ENCODE measurements at regions of chr11 and their contacts with region 1.

Region 1: DNA sequence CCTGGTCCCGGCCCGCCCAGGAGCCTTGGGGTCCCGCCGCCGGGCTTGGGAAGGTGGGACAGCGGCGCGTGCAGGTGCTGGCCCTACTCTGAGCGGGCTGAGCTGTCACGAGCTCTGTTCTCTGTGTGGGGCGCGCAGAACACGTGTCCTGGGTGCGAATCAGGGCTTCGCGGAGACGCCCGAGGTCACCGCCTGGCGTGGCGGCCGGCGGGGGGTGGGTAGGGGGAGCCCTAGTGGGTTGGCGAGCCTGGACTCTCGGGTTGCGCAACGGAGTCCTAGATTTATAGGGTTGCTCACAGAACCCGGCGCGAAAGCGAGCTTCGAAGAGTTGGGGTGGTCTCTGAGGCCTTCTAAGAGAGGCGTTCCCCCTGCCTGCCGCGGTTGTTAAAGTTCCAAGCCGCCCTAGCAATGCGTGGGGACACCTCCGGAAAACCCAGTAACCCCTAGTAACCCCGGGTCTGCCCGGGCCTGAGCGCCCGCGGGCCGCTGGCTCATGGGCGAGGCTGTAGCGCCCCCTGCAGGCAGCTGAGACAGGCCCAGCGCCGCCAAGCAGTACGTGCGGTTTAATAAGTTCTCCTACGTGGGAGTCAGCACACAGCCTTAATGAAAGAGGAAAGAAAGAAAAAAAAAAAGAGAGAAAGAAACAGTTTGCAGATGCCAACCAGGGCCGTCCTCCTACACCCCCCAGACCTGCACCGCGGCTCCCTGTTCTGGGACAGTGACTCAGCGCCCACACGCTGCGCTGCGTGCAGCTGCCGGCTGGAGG is 2.8 kb downstream of the ADM start:
- DNase-seq: peak; percentile 92
- ATAC-seq: peak; percentile 66

Region 2: DNA sequence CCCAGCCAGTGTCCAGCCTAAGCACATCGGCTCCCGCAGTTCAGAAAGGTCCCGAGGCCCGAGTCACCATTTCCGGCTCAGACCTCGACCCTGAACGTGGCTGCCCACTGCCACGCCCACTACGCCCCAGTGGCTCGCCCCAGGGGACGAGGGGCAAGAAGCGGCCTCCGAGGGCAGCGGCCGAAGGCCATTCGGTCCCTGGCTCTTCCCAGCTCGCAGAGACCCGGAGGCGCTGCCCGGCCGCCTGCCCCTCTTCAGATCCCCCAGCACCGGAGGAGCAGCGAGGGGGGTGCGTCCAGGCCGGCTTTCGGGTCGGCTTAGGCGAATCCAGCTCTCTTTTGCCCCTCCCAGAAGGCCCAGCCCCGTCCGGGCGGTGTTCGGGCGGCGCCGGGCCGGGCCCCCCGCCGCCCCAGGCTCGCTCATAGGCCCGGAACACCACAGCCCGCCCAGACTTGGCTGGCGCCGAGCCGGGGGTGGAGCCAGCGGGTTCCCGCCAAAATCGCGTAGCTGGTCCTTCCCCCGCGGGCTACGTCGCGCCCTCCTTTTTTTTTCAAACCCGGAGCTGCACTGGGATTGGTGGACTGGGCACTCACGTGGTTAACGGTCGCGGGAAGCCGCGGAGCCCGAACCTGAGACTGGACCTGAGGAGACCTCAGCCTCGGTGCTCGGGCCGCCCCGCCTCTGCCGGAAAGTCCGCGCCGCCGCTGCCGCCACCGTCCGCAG is 734.4 kb before region 1 on chr11 and contains the start of gene WEE1:
- intact Hi-C with region 1: loop called (anchors 5 kb)
- DNase-seq: peak; percentile 98
- ATAC-seq: peak; percentile 97
- total RNA-seq, gene WEE1: 40.1 TPM

Region 3: DNA sequence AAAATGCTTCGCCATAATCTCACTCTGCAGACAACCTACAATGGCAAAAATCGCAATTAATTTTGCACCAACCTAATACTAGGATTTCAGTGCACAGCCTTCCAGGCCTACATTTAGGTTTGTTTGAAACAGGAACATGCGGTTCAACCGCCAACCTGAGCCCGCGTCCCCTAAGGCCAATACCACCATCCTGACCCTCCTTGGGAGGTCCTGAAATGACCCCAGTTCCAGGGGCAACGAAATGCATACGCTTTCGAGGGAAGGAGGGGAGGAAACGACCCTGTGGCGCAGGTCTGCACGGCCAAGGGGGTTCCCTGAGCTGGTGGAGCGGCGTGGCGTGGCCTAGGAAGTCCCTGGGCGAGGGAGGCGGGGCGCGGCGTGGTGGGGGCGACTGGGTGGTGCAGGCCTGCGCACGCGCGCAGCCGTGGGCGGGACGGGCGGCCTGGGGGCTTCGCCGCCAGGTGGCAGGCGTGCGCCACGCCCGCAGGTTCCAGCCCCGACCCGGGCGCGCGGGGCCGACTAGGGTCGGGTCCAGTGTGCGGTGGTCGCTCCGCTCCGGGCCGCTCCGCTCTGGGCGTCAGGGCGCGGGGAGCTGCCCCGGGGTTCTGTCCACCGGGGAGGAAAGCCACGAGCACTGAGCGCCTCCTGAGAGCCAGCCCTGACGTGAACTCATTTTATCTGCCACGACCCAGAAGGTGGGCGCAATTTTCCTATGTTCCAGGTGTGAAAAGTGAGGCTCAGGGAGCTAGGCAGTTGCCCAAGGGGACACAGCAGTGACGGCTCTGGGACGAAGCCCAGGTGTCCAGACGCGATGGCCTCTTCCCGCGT is 549.6 kb before region 1 on chr11:
- intact Hi-C with region 1: loop called (anchors 1 kb)
- DNase-seq: peak; percentile 95
- ATAC-seq: peak; percentile 73

Region 4: GRCh38 chr11:9972989-9973388 is 334.6 kb before region 1 on chr11:
- intact Hi-C with region 1: loop called (anchors 5 kb)
- DNase-seq: no peak
- ATAC-seq: peak; percentile 80

Region 5: GRCh38 chr11:10155793-10156490 is 151.7 kb before region 1 on chr11:
- intact Hi-C with region 1: no loop called
- DNase-seq: no peak
- ATAC-seq: no peak

Region 6: DNA sequence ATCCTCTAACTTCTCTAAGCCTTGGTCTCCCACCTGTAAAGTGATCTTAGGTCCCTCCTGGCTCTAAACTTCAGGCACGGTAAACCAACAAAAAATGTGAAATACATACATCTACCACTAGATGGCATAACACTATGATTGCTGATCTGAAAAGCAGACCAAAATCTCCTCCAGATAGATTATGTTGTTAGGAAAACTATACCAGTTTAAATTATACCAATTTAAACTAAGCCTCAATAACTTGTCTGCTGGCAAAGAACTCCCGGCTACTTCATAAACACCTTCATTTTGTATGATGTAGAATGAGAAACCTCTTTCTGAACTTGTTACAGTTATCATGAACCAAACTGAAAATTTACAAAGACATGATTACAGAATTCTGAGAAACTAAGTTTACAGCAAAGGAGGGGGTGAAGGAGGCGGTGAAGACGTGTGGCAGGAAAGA is 99.5 kb before region 1 on chr11:
- intact Hi-C with region 1: loop called (anchors 2 kb)
- DNase-seq: no peak
- ATAC-seq: peak; percentile 34